Uterus (tissue), 4 donors: ENCODE measurements at regions of chr19 and their contacts with region 1.

Region 1: GRCh38 chr19:5577785-5578493 is 10.2 kb upstream of the TINCR start:
- DNase-seq: peak; percentile 53 to 64
- H3K4me3 ChIP-seq: no peak overlapping the region
- H3K27ac ChIP-seq: no peak overlapping the region
- H3K4me1 ChIP-seq: no peaks in the 10 kb centered on the region
- H3K27me3 ChIP-seq: no peaks in the 10 kb centered on the region
- CTCF ChIP-seq: peak; percentile 84 to 98 (median 92)
- POLR2A ChIP-seq: no peak

Region 2: DNA sequence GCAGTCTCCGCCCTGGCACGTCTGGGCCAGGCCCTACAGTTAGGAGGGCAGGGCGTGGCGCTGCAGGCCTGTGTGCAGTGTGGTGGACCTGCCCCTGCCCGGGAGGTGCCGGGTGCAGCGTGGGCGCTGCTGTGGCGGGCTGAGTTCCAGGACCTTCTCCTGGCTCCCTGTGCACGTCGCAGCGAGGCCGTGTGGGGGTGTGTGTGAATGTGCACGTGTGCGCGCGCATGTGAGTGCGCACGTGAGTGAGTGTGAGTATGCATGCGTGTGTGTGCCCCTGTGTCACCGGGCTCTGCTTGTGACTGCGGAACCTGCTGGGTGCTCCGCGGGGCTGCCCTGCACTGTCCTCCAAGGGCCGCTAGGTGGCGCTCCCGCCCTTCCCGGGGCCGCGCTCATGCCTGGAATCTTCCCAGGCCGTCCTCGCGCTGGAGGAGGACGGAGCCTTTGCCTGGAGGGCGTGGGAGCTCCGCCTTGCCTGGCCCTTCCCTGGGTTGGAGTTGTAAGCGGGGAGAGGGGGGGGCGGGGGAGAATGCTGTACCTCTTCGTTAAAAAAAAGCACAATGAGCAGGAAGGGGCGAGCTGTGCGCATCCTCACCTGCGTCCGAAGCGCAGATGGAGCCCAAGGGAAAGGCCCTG is 529.7 kb before region 1 on chr19:
- intact Hi-C with region 1: loop called (anchors 5 kb)
- DNase-seq: peak; percentile 80 to 87
- H3K4me3 ChIP-seq: no peak overlapping the region
- H3K27ac ChIP-seq: peak overlapping the region in 1 of 2 donors; percentile 41
- H3K4me1 ChIP-seq: peaks cover 0 to 15% of the 10 kb centered on the region in 2 donors
- H3K27me3 ChIP-seq: no peaks in the 10 kb centered on the region
- CTCF ChIP-seq: peak; percentile 98 to 99 (median 98)
- POLR2A ChIP-seq: peak in 1 of 2 donors; percentile 25